Posterior vena cava (tissue), 2 donors: ENCODE measurements at regions of chr15 and their contacts with region 1.

Region 1: DNA sequence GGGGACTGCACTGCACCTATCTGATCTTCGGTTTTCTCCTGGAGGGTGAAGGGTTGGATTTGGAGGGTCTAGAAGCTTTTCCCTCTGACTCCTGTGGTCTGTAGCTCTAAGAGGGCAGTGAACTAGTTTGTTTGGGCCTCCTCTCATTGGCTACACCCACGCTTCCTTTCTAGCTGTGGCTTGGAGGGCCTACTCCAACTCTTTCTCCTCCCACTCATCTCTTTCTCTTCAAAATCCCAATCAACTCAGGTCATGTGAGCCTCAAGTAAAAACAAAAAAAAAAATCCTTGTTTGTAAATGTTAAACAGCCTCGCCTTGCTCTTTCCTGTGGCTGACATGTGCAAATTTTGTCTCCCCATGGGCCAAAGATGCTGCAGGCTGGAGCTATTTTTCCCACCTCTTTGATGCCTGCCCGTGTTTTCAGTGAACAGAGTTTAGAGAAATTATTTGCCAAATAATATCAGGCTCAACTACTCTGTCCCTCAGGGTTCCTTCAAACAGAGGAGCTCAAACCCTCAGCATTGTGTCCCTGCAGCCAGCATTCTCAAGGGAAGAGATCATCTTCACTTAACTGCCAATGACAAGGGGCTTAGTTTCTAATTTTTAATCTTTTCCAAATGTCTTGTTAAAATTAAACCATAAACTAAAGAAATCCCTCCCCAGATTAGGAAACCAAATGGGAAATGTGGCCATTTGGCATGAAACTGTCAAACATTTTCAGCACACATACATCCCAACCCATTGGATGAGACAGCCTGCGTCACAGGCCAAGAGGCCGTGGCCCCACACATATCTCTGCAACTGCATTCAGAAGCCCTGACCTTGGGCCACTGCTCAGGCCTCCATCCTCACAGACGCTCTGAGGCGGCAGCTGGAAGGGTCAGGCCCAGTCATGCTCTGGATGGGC is 114.8 kb upstream of the THBS1 start:
- DNase-seq: peak; percentile 90

Region 2: DNA sequence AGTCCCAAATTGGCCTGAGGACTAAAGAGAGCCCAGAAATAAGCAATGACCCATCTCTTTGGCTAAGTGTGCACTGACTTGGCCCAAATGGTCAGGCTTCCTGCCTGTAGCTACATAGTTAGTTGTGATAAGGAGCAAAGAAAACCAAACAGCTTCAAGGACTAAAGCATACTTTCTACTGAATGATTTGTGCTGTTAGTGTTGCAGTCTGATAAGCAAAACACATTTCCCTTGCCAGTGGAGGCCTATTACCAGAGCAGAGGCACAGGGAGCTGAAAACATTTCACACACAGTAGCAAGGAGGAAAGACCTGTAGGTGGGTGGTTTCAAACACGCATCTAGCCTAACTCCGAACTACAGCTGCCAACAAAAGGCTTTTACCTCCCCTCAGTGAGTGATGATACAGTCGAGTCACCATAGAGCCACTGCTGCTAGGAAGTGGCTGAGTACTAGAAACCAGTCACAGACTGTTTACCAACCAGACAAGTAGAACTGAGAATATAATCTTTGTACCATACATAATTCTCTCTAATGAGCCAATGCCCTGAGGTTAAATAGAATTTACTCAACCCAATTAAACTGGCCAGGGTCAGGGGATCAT is 107.6 kb before region 1 on chr15:
- intact Hi-C with region 1: loop called in 1 of 2 experiments (anchors 10 kb)
- DNase-seq: no peak

Region 3: DNA sequence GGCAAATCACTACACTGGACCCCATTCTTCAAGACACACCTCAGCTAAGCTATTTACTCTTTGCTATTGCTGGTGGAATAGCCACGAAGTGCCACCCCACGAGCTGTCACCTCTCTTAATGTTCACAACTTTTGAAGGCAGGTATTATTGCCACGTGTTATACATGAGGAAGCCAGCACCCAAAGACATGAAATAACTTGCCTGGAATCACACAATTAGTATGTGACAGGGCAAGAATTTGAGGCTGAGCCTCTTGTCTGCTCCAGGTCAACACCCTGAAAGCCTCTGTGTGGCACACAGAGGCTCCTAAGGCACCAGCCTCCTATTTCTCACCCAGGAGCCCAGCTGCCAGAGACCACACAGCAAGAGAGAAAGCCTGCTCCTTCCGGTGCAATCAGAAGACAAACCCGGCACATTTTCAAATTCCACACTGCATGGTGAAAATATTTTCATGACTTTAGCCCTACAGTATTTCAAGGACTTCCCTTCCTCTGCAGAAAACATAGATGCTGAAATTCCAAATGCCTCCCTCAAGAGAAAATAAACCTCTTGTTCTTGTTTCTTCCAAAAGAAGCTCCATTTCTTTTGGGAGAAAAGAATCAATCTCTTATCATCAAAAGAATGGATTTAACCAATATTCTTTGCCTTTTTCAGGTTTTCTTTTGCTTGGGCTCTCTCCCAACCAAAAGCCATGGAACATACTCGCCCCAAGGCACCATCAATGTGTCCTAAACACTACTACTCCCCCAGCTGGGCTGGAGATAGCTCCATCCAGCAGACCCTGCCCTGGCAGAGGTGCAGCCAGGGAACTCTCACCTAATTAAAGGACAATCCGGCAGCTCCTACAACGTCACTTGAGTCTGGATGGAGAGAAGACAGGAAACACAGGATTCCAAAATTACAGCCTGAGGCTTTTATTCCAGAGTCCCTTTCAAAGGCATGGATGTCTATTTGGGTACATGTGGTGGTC is 30.1 kb after region 1 on chr15:
- intact Hi-C with region 1: loop called in 1 of 2 experiments (anchors 5 kb)
- DNase-seq: no peak